Activated B cell treated with CpG ODN at 0.5 μM for 24 hours (primary cell): ENCODE measurements at regions of chr18 and their contacts with region 1.

Region 1: GRCh38 chr18:61893971-61894750 is 1.4 kb upstream of the RNF152 start:
- DNase-seq: peak; percentile 40
- ATAC-seq: peak; percentile 90
- H3K4me3 Mint-ChIP-seq: peak overlapping the region; percentile 76
- H3K27ac Mint-ChIP-seq: no peak overlapping the region
- H3K4me1 Mint-ChIP-seq: peaks cover 15% of the 10 kb centered on the region
- H3K27me3 Mint-ChIP-seq: peaks cover 54% of the 10 kb centered on the region
- CTCF ChIP-seq: no peak

Region 2: GRCh38 chr18:61581578-61582201 is 312.5 kb before region 1 on chr18:
- CTCF ChIA-PET with region 1: no interaction called
- POLR2A ChIA-PET with region 1: no interaction called
- intact Hi-C with region 1: loop called (anchors 5 kb)
- DNase-seq: peak; percentile 50
- ATAC-seq: peak; percentile 49
- H3K4me3 Mint-ChIP-seq: no peak overlapping the region
- H3K27ac Mint-ChIP-seq: no peak overlapping the region
- H3K4me1 Mint-ChIP-seq: peaks cover 6% of the 10 kb centered on the region
- H3K27me3 Mint-ChIP-seq: peaks cover 25% of the 10 kb centered on the region
- CTCF ChIP-seq: no peak

Region 3: GRCh38 chr18:61926532-61926931 is 32.4 kb after region 1 on chr18:
- CTCF ChIA-PET with region 1: no interaction called
- POLR2A ChIA-PET with region 1: no interaction called
- intact Hi-C with region 1: no loop called
- DNase-seq: no peak
- ATAC-seq: no peak
- H3K4me3 Mint-ChIP-seq: no peak overlapping the region
- H3K27ac Mint-ChIP-seq: no peak overlapping the region
- H3K4me1 Mint-ChIP-seq: no peaks in the 10 kb centered on the region
- H3K27me3 Mint-ChIP-seq: peaks cover 15% of the 10 kb centered on the region
- CTCF ChIP-seq: no peak

Region 4: GRCh38 chr18:61955644-61956043 is 61.5 kb after region 1 on chr18:
- CTCF ChIA-PET with region 1: no interaction called
- POLR2A ChIA-PET with region 1: no interaction called
- intact Hi-C with region 1: loop called (anchors 2 kb)
- DNase-seq: no peak
- ATAC-seq: no peak
- H3K4me3 Mint-ChIP-seq: no peak overlapping the region
- H3K27ac Mint-ChIP-seq: no peak overlapping the region
- H3K4me1 Mint-ChIP-seq: peaks cover 19% of the 10 kb centered on the region
- H3K27me3 Mint-ChIP-seq: peaks cover 31% of the 10 kb centered on the region
- CTCF ChIP-seq: no peak